ENCODE measurements at regions of chr2 and their contacts with region 1.

Region 1: GRCh38 chr2:241168366-241168765 is 18.1 kb downstream of the PPP1R7 start:
- DNase-seq: no peak
- ATAC-seq: no peak
- H3K4me3 ChIP-seq: no peak overlapping the region
- H3K27ac ChIP-seq: no peak overlapping the region
- H3K4me1 ChIP-seq: no peaks in the 10 kb centered on the region
- H3K27me3 ChIP-seq: no peaks in the 10 kb centered on the region
- CTCF ChIP-seq: no peak
- EP300 ChIP-seq: no peak
- POLR2A ChIP-seq: no peak
- RAD21 ChIP-seq: no peak

Region 2: GRCh38 chr2:241125626-241126025 is 42.7 kb before region 1 on chr2:
- CTCF ChIA-PET with region 1: no interaction called
- POLR2A ChIA-PET with region 1: no interaction called
- in situ Hi-C with region 1: no loop called
- intact Hi-C with region 1: loop called (anchors 2 kb)
- DNase-seq: no peak
- ATAC-seq: no peak
- H3K4me3 ChIP-seq: no peak overlapping the region
- H3K27ac ChIP-seq: no peak overlapping the region
- H3K4me1 ChIP-seq: no peaks in the 10 kb centered on the region; a peak in 1 of 5 replicates
- H3K27me3 ChIP-seq: no peaks in the 10 kb centered on the region
- CTCF ChIP-seq: no peak
- EP300 ChIP-seq: no peak
- POLR2A ChIP-seq: no peak
- RAD21 ChIP-seq: no peak

Region 3: GRCh38 chr2:241139531-241140444 is 28.6 kb before region 1 on chr2:
- CTCF ChIA-PET with region 1: no interaction called
- POLR2A ChIA-PET with region 1: no interaction called
- in situ Hi-C with region 1: no loop called
- intact Hi-C with region 1: no loop called
- DNase-seq: no peak
- ATAC-seq: no peak
- H3K4me3 ChIP-seq: no peak overlapping the region
- H3K27ac ChIP-seq: no peak overlapping the region
- H3K4me1 ChIP-seq: peaks cover 0 to 6% of the 10 kb centered on the region in 2 experiments; a peak in 1 of 5 replicates
- H3K27me3 ChIP-seq: no peaks in the 10 kb centered on the region
- CTCF ChIP-seq: no peak
- EP300 ChIP-seq: no peak
- POLR2A ChIP-seq: no peak
- RAD21 ChIP-seq: no peak

Measured in K562 (cell line).